Mammary epithelial cell (primary cell): ENCODE measurements at regions of chr1 and their contacts with region 1.

Region 1: GRCh38 chr1:17502326-17502778 is 37.1 kb upstream of the ARHGEF10L start:
- DNase-seq: peak; percentile 52
- H3K4me3 ChIP-seq: no peak overlapping the region
- H3K27ac ChIP-seq: no peak overlapping the region
- H3K4me1 ChIP-seq: no peaks in the 10 kb centered on the region
- H3K27me3 ChIP-seq: no peaks in the 10 kb centered on the region
- CTCF ChIP-seq: peak; percentile 90 to 96

Region 2: GRCh38 chr1:17348125-17348979 is 154.0 kb before region 1 on chr1:
- CTCF ChIA-PET with region 1: no interaction called
- dilution Hi-C with region 1: no loop called
- in situ Hi-C with region 1: no loop called
- intact Hi-C with region 1: no loop called
- DNase-seq: peak; percentile 95
- H3K4me3 ChIP-seq: peak overlapping the region in 1 of 3 experiments; percentile 12
- H3K27ac ChIP-seq: peak overlapping the region; percentile 81
- H3K4me1 ChIP-seq: peaks cover 15% of the 10 kb centered on the region
- H3K27me3 ChIP-seq: no peaks in the 10 kb centered on the region
- CTCF ChIP-seq: no peak

Region 3: DNA sequence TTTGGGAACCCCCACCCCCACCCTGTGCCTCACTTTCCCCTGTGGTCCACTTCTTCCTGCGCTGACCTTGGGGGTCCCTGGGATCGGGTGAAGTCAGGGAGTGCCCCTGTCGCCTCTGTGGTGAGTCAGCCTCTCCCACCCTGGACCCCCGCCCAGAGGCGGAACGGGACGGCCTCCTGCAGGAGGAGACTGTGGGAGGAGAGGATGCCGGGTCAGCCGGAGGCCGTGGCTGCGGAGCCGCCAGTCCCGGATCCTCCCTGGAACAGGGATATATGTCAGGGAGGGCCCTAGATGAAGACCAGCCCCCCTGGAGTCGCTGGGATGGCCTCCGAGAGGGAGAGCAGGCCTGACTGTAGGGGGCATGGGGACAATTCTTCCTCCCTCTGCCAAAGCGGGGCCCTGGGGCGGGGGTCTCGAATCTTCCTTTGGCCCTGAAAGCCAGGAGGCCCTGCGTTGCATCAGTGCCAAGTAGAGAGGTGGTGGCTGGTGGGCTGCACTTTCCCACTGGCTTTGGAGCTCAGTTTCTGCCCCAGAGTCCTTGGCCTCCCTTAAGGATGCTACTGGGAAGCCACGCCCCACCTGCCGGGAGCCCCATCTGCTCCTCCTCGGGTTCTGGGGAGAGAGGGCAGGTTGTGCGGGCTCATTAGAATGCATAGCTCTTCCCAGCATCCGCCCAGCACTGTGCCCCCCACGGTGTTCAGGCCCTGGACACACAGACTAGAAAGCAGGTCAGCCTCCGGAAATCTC is 38.1 kb after region 1 on chr1:
- CTCF ChIA-PET with region 1: no interaction called
- dilution Hi-C with region 1: no loop called
- in situ Hi-C with region 1: no loop called
- intact Hi-C with region 1: no loop called
- DNase-seq: no peak
- H3K4me3 ChIP-seq: peak overlapping the region; percentile 49 to 56 (median 51)
- H3K27ac ChIP-seq: no peak overlapping the region
- H3K4me1 ChIP-seq: peaks cover 3% of the 10 kb centered on the region
- H3K27me3 ChIP-seq: peaks cover 9% of the 10 kb centered on the region
- CTCF ChIP-seq: no peak

Region 4: GRCh38 chr1:17574516-17574915 is 72.2 kb after region 1 on chr1:
- CTCF ChIA-PET with region 1: no interaction called
- dilution Hi-C with region 1: no loop called
- in situ Hi-C with region 1: no loop called
- intact Hi-C with region 1: loop called (anchors 1 kb)
- DNase-seq: no peak
- H3K4me3 ChIP-seq: no peak overlapping the region
- H3K27ac ChIP-seq: no peak overlapping the region
- H3K4me1 ChIP-seq: peaks cover 7% of the 10 kb centered on the region
- H3K27me3 ChIP-seq: no peaks in the 10 kb centered on the region
- CTCF ChIP-seq: peak; percentile 23 to 38

Region 5: GRCh38 chr1:17624611-17625233 is 122.4 kb after region 1 on chr1:
- CTCF ChIA-PET with region 1: no interaction called
- dilution Hi-C with region 1: no loop called
- in situ Hi-C with region 1: no loop called
- intact Hi-C with region 1: no loop called
- DNase-seq: peak; percentile 72
- H3K4me3 ChIP-seq: no peak overlapping the region
- H3K27ac ChIP-seq: no peak overlapping the region
- H3K4me1 ChIP-seq: peaks cover 13% of the 10 kb centered on the region
- H3K27me3 ChIP-seq: no peaks in the 10 kb centered on the region
- CTCF ChIP-seq: no peak